ENCODE measurements at regions of chr20 and their contacts with region 1.

Region 1: DNA sequence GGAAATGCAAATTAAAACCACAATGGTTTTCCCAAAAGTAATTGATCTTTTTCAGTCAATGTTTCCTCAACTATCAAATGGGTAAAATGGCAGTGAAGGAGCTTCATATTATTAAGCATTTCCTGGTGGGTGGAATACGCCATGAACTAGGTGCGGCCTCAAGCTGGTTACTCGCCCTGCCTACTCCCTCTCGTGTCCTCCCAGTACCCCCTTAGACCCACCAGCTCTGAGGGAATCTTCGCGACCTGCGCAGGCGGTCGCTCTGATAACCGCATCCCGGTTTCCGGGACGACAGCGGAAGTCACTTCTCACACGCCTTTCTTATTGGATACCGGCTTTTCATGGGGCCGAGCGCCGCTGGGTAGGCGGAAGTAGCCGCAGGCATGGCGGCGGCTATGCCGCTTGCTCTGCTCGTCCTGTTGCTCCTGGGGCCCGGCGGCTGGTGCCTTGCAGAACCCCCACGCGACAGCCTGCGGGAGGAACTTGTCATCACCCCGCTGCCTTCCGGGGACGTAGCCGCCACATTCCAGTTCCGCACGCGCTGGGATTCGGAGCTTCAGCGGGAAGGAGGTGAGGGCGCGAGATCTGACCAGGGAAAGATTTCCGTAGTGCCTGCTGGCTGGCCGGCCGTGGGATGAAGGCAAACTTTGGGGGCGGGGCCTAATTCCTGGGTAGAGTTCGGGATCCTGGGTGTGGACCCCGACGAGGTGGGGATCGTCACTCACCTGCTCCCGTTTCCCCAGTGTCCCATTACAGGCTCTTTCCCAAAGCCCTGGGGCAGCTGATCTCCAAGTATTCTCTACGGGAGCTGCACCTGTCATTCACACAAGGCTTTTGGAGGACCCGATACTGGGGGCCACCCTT is at the start of gene PIGT:
- DNase-seq: peak; percentile 71 to 94 (median 93)
- ATAC-seq: peak; percentile 98
- H3K4me3 ChIP-seq: peak within 1 kb of the TSS; percentile 98
- H3K4me3 Mint-ChIP-seq: peak within 1 kb of the TSS; percentile 91 to 97 (median 94)
- H3K27ac ChIP-seq: peak within 1 kb of the TSS; percentile 95
- H3K27ac Mint-ChIP-seq: peak within 1 kb of the TSS; percentile 94 to 99 (median 97)
- H3K4me1 ChIP-seq: peaks cover 12 to 21% of the 10 kb centered on the region in 2 donors
- H3K4me1 Mint-ChIP-seq: peaks cover 17 to 50% (median 32%) of the 10 kb centered on the region in 7 donors
- H3K27me3 ChIP-seq: no peaks in the 10 kb centered on the region
- H3K27me3 Mint-ChIP-seq: no peaks in the 10 kb centered on the region
- total RNA-seq, gene PIGT: 78.7 to 140 (median 85.0) TPM

Region 2: GRCh38 chr20:44651684-44652423 is 764.2 kb before region 1 on chr20 and contains the start of gene ADA:
- CTCF ChIA-PET with region 1: no interaction called
- POLR2A ChIA-PET with region 1: no interaction called
- intact Hi-C with region 1: loop called in 1 of 2 experiments (anchors 5 kb)
- DNase-seq: peak; percentile 26 to 70 (median 48)
- ATAC-seq: peak; percentile 70
- H3K4me3 ChIP-seq: peak within 1 kb of the TSS; percentile 73
- H3K4me3 Mint-ChIP-seq: peak within 1 kb of the TSS; percentile 81 to 96 (median 94)
- H3K27ac ChIP-seq: peak within 1 kb of the TSS; percentile 73
- H3K27ac Mint-ChIP-seq: peak within 1 kb of the TSS; percentile 88 to 98 (median 95)
- H3K4me1 ChIP-seq: peaks cover 38 to 43% of the 10 kb centered on the region in 2 donors
- H3K4me1 Mint-ChIP-seq: peaks cover 40 to 57% (median 55%) of the 10 kb centered on the region in 7 donors
- H3K27me3 ChIP-seq: no peaks in the 10 kb centered on the region
- H3K27me3 Mint-ChIP-seq: no peaks in the 10 kb centered on the region
- total RNA-seq, gene ADA: 26.1 to 103 (median 28.2) TPM

Region 3: GRCh38 chr20:45223136-45223535 is 192.9 kb before region 1 on chr20:
- CTCF ChIA-PET with region 1: no interaction called
- POLR2A ChIA-PET with region 1: no interaction called
- intact Hi-C with region 1: no loop called
- DNase-seq: no peak
- ATAC-seq: no peak
- H3K4me3 ChIP-seq: no peak overlapping the region
- H3K4me3 Mint-ChIP-seq: no peak overlapping the region
- H3K27ac ChIP-seq: no peak overlapping the region
- H3K27ac Mint-ChIP-seq: no peak overlapping the region
- H3K4me1 ChIP-seq: no peaks in the 10 kb centered on the region
- H3K4me1 Mint-ChIP-seq: no peaks in the 10 kb centered on the region
- H3K27me3 ChIP-seq: no peaks in the 10 kb centered on the region
- H3K27me3 Mint-ChIP-seq: peaks cover 34 to 56% (median 47%) of the 10 kb centered on the region in 5 donors

Region 4: GRCh38 chr20:45373353-45374100 is 42.5 kb before region 1 on chr20:
- CTCF ChIA-PET with region 1: interaction called, 18 read pairs
- POLR2A ChIA-PET with region 1: interaction called, 42 read pairs
- intact Hi-C with region 1: loop called (anchors 1 to 2 kb)
- DNase-seq: peak; percentile 81 to 90 (median 89)
- ATAC-seq: peak; percentile 94
- H3K4me3 ChIP-seq: peak overlapping the region; percentile 74
- H3K4me3 Mint-ChIP-seq: peak overlapping the region; percentile 84 to 94 (median 90)
- H3K27ac ChIP-seq: peak overlapping the region; percentile 77
- H3K27ac Mint-ChIP-seq: peak overlapping the region; percentile 87 to 97 (median 96)
- H3K4me1 ChIP-seq: peaks cover 13 to 29% of the 10 kb centered on the region in 2 donors
- H3K4me1 Mint-ChIP-seq: peaks cover 18 to 48% (median 46%) of the 10 kb centered on the region in 7 donors
- H3K27me3 ChIP-seq: no peaks in the 10 kb centered on the region
- H3K27me3 Mint-ChIP-seq: no peaks in the 10 kb centered on the region

Region 5: GRCh38 chr20:45436732-45437391 is 20.9 kb after region 1 on chr20:
- CTCF ChIA-PET with region 1: interaction called, 21 read pairs
- POLR2A ChIA-PET with region 1: interaction called, 12 read pairs
- intact Hi-C with region 1: loop called (anchors 1 to 2 kb)
- DNase-seq: peak; percentile 70 to 89 (median 80)
- ATAC-seq: peak; percentile 100
- H3K4me3 ChIP-seq: peak overlapping the region; percentile 65
- H3K4me3 Mint-ChIP-seq: peak overlapping the region; percentile 71 to 86 (median 81)
- H3K27ac ChIP-seq: peak overlapping the region; percentile 50
- H3K27ac Mint-ChIP-seq: peak overlapping the region in 6 of 9 donors; percentile 31 to 84 (median 64)
- H3K4me1 ChIP-seq: peaks cover 5 to 11% of the 10 kb centered on the region in 2 donors
- H3K4me1 Mint-ChIP-seq: peaks cover 0 to 24% (median 14%) of the 10 kb centered on the region in 7 donors
- H3K27me3 ChIP-seq: no peaks in the 10 kb centered on the region
- H3K27me3 Mint-ChIP-seq: no peaks in the 10 kb centered on the region

Region 6: GRCh38 chr20:45857114-45857881 is 441.3 kb after region 1 on chr20 and contains the starts of genes ACOT8 and ZSWIM3:
- CTCF ChIA-PET with region 1: no interaction called
- POLR2A ChIA-PET with region 1: no interaction called
- intact Hi-C with region 1: loop called in 1 of 2 experiments (anchors 10 kb)
- DNase-seq: peak; percentile 62 to 100 (median 97)
- ATAC-seq: peak; percentile 99
- H3K4me3 ChIP-seq: peak within 1 kb of the TSS; percentile 94
- H3K4me3 Mint-ChIP-seq: peak within 1 kb of the TSS; percentile 95 to 98 (median 96)
- H3K27ac ChIP-seq: peak within 1 kb of the TSS; percentile 95
- H3K27ac Mint-ChIP-seq: peak within 1 kb of the TSS; percentile 96 to 99 (median 98)
- H3K4me1 ChIP-seq: peaks cover 16 to 26% of the 10 kb centered on the region in 2 donors
- H3K4me1 Mint-ChIP-seq: peaks cover 23 to 76% (median 63%) of the 10 kb centered on the region in 7 donors
- H3K27me3 ChIP-seq: no peaks in the 10 kb centered on the region
- H3K27me3 Mint-ChIP-seq: no peaks in the 10 kb centered on the region
- total RNA-seq, gene ACOT8: 20.5 to 35.5 (median 29.2) TPM
- total RNA-seq, gene ZSWIM3: 1.3 to 6.8 (median 6.0) TPM

Measured in naive thymus-derived CD4-positive, alpha-beta T cell (primary cell).